ENCODE measurements at regions of chr1 and their contacts with region 1.

Region 1: DNA sequence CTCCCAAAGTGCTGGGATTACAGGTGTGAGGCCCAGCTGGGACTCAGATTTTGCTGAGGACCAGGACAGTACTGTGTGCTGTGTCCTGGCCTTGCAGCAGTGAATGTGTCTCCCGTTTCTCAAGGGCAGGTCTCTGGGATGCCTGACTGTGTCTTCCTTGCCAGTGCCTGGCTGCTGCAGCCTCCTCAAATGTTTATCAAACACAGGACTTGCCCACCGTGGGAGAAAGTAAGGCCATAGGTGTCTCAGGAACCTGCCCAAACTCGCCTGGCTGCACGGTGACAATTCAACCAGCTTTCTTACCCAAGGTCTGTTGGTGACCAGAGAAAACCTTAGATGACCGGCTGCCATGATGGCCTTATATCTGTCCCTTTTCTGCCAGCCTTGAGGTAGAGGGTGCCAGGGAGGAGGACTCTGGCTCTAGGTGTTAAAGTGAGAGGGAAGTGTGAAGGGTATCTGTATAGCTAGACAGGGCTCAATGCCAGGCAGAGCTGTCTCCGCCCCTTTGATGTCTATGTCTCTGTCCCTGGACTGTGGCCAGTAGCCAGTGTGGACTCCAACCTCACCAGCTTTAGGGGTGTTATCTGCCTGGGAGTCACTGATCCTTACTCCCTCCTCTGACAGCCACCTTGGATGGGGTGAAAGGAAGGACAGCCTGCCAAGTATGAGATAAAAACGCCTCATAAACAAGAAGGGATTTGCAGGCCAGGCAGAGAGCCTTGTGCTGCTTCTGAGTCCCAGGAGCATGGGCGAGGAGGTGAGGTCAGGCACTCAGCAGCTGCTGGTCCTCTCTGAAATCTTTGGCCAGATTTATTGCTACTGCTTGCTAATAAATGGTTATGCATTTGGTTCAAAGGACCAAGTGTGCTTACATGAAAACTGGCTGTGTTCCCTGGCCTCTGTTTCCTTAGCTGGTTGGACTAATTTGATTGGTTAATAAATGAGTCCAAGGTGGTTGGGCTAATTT is 22.3 kb downstream of the IL6R start:
- DNase-seq: no peak
- H3K27ac ChIP-seq: peak overlapping the region; percentile 92
- CTCF ChIP-seq: no peak

Region 2: DNA sequence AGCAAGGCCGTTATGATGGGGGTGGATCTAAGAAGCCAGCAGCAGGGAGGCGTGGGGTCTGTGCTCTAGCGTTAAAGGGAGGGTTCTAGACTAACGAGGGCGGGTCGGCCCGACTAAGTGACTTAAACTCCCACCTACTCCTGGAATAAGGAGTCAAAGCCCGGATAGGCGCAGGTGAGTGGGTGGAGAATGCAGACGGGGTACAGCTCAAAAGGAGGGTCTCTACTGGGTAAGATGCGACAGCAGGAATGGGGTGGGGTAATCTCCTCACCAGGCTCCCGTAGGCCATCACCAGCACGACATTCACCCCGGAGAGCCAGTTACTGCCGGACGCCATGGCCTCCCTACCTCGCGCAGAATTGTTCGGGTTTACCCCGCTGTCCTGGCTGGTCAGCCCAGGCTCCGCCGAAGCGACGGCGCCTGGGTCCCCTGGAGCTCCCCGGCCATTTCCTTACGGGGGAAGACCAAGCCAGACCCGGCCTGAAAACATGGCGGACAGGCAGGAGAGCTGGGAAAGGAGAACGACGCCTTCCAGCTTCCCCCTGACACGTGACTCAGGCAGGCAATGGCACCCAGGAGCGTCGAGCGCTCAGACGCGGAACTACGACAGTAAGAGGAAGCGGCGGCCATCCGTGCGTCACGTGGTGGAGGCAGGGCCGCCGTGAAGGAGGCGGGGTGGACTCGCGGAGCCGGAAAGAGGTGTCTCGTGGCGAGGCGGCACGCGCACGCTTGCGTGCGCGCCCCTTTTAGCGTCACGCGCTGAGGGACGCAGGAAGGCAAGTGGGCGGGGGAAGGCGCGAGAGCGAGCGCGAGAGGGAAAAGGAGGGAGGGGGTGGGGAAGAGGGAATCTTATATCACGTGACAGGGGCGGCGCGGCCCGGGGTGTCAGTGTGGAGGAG is 207.1 kb before region 1 on chr1 and contains the start of gene UBAP2L:
- CTCF ChIA-PET with region 1: no interaction called
- POLR2A ChIA-PET with region 1: interaction called, 11 read pairs
- DNase-seq: peak; percentile 90
- H3K27ac ChIP-seq: peak within 1 kb of the TSS; percentile 92
- CTCF ChIP-seq: no peak

Region 3: DNA sequence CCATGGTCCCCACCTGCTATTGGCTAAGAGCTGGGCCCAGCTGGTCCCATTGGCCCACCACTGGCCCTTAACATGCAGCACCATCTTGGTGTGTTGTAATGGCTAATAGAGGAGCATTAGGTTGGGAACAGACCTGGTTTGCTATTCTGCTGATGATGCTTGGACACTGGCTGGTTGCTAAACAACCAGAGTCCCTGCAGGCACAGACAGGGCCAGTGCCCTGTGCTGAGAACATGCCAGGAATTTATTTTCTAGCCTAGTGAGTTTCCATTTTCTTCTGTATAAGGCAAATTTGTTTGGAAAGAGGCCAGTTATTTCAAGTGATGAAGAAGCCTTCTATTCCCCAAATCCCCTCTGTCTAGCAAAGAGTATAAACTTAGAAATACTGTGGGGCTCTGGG is 31.6 kb after region 1 on chr1:
- CTCF ChIA-PET with region 1: no interaction called
- POLR2A ChIA-PET with region 1: no interaction called
- DNase-seq: no peak
- H3K27ac ChIP-seq: peak overlapping the region; percentile 37; the same call in 1 of the 2 replicates
- CTCF ChIP-seq: no peak

Region 4: DNA sequence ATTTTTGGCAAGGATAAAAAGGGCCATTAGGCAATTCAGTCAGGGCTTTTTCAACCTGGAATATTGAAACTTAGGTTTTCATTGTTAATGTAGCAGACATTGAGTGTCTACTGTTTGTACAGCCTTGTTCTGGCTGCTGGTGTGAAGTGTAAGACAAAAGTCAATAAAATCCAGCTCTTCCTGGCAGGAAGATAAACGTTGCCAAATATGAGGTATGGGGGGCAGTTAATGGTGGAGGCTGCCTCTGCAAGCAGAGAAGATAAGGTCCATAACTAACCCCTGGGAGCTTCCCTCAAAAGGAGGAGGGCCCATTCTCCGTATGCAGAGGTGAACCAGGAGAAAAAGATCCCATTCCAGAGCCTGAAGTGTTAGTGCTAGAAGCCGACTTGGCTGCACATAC is 94.2 kb after region 1 on chr1:
- CTCF ChIA-PET with region 1: no interaction called
- POLR2A ChIA-PET with region 1: no interaction called
- DNase-seq: no peak
- H3K27ac ChIP-seq: no peak overlapping the region
- CTCF ChIP-seq: no peak